ENCODE measurements at regions of chr10 and their contacts with region 1.

Region 1: DNA sequence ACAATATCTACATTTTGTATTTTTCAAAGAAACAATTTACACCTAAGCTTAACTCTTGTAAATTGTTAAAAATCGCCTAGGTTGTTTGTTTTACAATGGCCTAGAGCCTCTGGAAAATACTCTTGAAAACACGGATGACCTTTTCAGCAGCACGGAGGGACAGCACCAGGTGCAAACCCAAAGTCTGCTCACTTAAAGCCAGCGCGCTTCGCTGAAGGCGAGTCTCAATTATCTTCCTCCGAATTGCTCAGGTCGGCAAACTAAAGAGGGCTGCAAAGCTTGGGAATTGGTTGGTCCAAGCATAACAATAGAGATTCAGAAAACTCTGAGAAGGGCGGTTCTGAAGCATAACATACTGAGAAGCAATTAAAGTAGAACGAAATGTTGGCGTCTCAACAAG is 139.8 kb upstream of the PITRM1 start:
- DNase-seq: no peak
- H3K4me3 ChIP-seq: no peak overlapping the region
- H3K4me3 Mint-ChIP-seq: no peak overlapping the region
- H3K27ac ChIP-seq: no peak overlapping the region
- H3K27ac Mint-ChIP-seq: no peak overlapping the region
- H3K4me1 ChIP-seq: no peaks in the 10 kb centered on the region
- H3K4me1 Mint-ChIP-seq: no peaks in the 10 kb centered on the region
- H3K27me3 ChIP-seq: no peaks in the 10 kb centered on the region
- H3K27me3 Mint-ChIP-seq: peaks cover 4 to 12% (median 10%) of the 10 kb centered on the region in 3 donors
- CTCF ChIP-seq: no peak

Region 2: DNA sequence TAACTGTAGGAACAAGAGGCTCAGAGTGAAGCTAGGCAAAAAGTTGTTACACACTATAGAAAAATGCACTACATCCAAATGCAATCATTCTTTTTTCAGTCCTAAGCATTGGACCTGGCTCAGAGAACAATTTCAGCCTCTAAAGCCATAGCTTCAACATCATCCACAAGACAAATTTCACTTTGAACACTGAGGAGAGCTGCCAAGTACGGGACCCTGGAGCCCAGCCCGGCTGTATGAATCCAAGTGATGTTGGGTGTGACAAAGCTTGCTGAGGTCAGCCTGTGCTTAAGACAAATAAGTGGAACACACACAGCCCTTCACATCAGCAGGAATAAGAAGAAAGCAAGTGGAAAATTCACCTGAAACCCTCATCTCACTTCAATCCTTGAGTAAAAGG is 478.2 kb before region 1 on chr10:
- intact Hi-C with region 1: no loop called
- DNase-seq: no peak
- H3K4me3 ChIP-seq: no peak overlapping the region
- H3K4me3 Mint-ChIP-seq: no peak overlapping the region
- H3K27ac ChIP-seq: no peak overlapping the region
- H3K27ac Mint-ChIP-seq: no peak overlapping the region
- H3K4me1 ChIP-seq: no peaks in the 10 kb centered on the region
- H3K4me1 Mint-ChIP-seq: no peaks in the 10 kb centered on the region
- H3K27me3 ChIP-seq: no peaks in the 10 kb centered on the region
- H3K27me3 Mint-ChIP-seq: peaks cover 0 to 8% (median 3%) of the 10 kb centered on the region in 3 donors
- CTCF ChIP-seq: no peak

Region 3: GRCh38 chr10:3472287-3473051 is 160.1 kb after region 1 on chr10:
- intact Hi-C with region 1: loop called in 1 of 2 experiments (anchors 5 kb)
- DNase-seq: peak; percentile 54 to 86 (median 82)
- H3K4me3 ChIP-seq: peak overlapping the region in 2 of 3 experiments; percentile 31 to 63
- H3K4me3 Mint-ChIP-seq: peak overlapping the region; percentile 65 to 73
- H3K27ac ChIP-seq: peak overlapping the region; percentile 36 to 81
- H3K27ac Mint-ChIP-seq: peak overlapping the region; percentile 84 to 96 (median 92)
- H3K4me1 ChIP-seq: peaks cover 63% of the 10 kb centered on the region in 2 donors
- H3K4me1 Mint-ChIP-seq: peaks cover 64% of the 10 kb centered on the region
- H3K27me3 ChIP-seq: no peaks in the 10 kb centered on the region
- H3K27me3 Mint-ChIP-seq: peaks cover 0 to 4% (median 0%) of the 10 kb centered on the region in 3 donors
- CTCF ChIP-seq: no peak

Region 4: DNA sequence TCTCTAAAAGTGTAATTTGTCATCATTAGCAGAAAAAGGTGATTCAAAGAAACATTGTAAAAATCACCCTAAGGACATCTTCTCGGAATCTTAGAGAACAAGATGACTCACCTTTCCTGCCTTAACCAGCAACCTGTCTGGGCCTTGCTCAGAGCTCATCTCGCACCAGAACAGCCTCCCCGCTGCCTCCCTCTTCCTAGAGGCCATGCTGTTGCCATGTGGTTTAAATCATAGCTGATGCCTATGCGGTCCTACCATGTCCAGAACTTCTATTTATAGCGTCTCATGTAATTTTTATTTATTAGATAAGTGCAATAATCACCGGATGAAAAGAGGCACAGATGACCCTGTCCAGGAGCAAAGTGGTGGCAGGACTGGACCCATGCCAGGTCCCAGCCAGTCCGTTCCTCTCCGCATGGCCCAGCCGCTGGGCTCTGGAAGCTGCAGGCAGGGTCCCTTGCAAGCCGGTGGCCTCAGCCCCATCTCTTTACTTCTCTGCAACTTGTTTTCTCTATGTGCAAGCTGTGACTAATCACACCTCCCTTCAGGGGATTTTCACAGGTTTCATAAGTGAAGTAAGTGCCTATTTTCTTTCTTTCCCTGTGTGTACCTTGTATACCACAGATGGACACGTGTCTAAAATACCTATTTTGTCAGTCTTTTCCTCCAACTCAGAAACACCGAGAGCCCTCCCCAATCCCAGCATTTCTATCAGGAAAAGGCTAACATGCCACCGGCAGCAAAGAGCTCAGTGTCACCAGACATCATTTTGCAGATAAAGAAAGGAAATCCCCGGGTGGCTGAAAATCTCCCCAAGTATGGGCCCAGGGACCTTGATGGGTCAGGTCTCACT is 445.5 kb after region 1 on chr10:
- intact Hi-C with region 1: loop called in 1 of 2 experiments (anchors 10 kb)
- DNase-seq: peak in 2 of 3 donors; percentile 35 to 73
- H3K4me3 ChIP-seq: no peak overlapping the region
- H3K4me3 Mint-ChIP-seq: no peak overlapping the region
- H3K27ac ChIP-seq: no peak overlapping the region
- H3K27ac Mint-ChIP-seq: peak overlapping the region in 4 of 7 donors; percentile 11 to 76 (median 42)
- H3K4me1 ChIP-seq: peaks cover 66 to 79% of the 10 kb centered on the region in 2 donors
- H3K4me1 Mint-ChIP-seq: peaks cover 69% of the 10 kb centered on the region
- H3K27me3 ChIP-seq: no peaks in the 10 kb centered on the region
- H3K27me3 Mint-ChIP-seq: peaks cover 1 to 5% (median 2%) of the 10 kb centered on the region in 3 donors
- CTCF ChIP-seq: no peak

Measured in CD14-positive monocyte (primary cell).